ENCODE measurements at regions of chr14 and their contacts with region 1.

Region 1: GRCh38 chr14:69586404-69586803 is 11.7 kb upstream of the CCDC177 start:
- DNase-seq: no peak
- ATAC-seq: no peak
- H3K4me3 ChIP-seq: no peak overlapping the region
- H3K4me3 Mint-ChIP-seq: no peak overlapping the region
- H3K27ac ChIP-seq: no peak overlapping the region
- H3K27ac Mint-ChIP-seq: no peak overlapping the region
- H3K4me1 ChIP-seq: peaks cover 0 to 2% of the 10 kb centered on the region in 2 experiments
- H3K4me1 Mint-ChIP-seq: peaks cover 0 to 5% (median 0%) of the 10 kb centered on the region in 3 donors
- H3K27me3 ChIP-seq: peaks cover 0 to 2% of the 10 kb centered on the region in 2 experiments
- H3K27me3 Mint-ChIP-seq: no peaks in the 10 kb centered on the region

Region 2: GRCh38 chr14:69346710-69347109 is 239.7 kb before region 1 on chr14:
- CTCF ChIA-PET with region 1: no interaction called
- POLR2A ChIA-PET with region 1: no interaction called
- DNase-seq: peak in 2 of 35 experiments; percentile 8 to 14
- ATAC-seq: no peak
- H3K4me3 ChIP-seq: no peak overlapping the region
- H3K4me3 Mint-ChIP-seq: no peak overlapping the region
- H3K27ac ChIP-seq: no peak overlapping the region
- H3K27ac Mint-ChIP-seq: no peak overlapping the region
- H3K4me1 ChIP-seq: no peaks in the 10 kb centered on the region
- H3K4me1 Mint-ChIP-seq: no peaks in the 10 kb centered on the region
- H3K27me3 ChIP-seq: peaks cover 0 to 19% of the 10 kb centered on the region in 2 experiments
- H3K27me3 Mint-ChIP-seq: peaks cover 2 to 11% of the 10 kb centered on the region in 2 donors

Region 3: GRCh38 chr14:69726761-69727511 is 140.5 kb after region 1 on chr14:
- CTCF ChIA-PET with region 1: interaction called, 11 to 12 read pairs
- POLR2A ChIA-PET with region 1: interaction called, 3 to 4 read pairs
- DNase-seq: peak; percentile 44 to 90 (median 76)
- ATAC-seq: peak; percentile 90 to 94 (median 92)
- H3K4me3 ChIP-seq: peak overlapping the region; percentile 47 to 55
- H3K4me3 Mint-ChIP-seq: peak overlapping the region; percentile 54 to 73 (median 67)
- H3K27ac ChIP-seq: peak overlapping the region; percentile 40
- H3K27ac Mint-ChIP-seq: peak overlapping the region; percentile 56 to 70
- H3K4me1 ChIP-seq: peaks cover 0 to 12% of the 10 kb centered on the region in 2 experiments
- H3K4me1 Mint-ChIP-seq: peaks cover 12 to 30% (median 22%) of the 10 kb centered on the region in 3 donors
- H3K27me3 ChIP-seq: no peaks in the 10 kb centered on the region
- H3K27me3 Mint-ChIP-seq: peaks cover 0 to 4% of the 10 kb centered on the region in 2 donors

Region 4: DNA sequence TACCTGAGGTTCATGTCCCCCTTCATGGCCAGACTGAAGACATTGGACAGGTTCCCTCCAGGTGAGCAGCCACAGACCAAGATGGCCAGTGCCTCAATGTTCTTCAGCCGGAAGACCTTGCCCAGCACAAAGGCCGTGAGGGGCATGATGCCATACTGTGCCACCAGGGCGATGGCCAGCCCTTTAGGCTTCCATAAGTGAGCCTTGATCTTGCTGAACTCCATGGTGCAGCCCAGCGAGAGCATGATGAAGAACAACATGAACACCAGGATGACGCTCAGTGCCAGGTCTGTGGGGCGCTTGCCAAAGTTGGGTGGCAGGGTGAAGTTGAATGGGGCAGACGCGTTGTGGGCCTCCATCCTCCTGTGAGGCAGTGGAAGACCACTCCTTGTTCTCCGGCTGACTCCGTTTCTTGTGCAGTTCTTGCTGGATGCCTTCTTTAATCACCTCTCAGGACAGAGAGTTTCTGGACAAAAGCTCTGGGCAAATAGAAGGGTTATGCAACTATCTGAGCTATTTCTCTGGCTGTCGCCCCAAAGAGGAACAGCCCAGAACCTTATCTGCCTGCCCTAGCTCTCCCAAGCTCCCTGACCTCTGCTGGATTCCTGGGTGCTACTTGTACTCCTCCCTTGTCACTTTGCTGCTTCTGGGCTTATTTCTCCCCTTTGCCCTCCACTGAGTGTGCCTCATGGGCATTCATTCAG is 210.5 kb after region 1 on chr14 and contains the start of gene SLC10A1:
- CTCF ChIA-PET with region 1: no interaction called
- POLR2A ChIA-PET with region 1: no interaction called
- DNase-seq: no peak
- ATAC-seq: no peak
- H3K4me3 ChIP-seq: no peak within 1 kb of the TSS
- H3K4me3 Mint-ChIP-seq: no peak within 1 kb of the TSS
- H3K27ac ChIP-seq: no peak within 1 kb of the TSS
- H3K27ac Mint-ChIP-seq: no peak within 1 kb of the TSS
- H3K4me1 ChIP-seq: no peaks in the 10 kb centered on the region
- H3K4me1 Mint-ChIP-seq: no peaks in the 10 kb centered on the region
- H3K27me3 ChIP-seq: peaks cover 0 to 4% of the 10 kb centered on the region in 2 experiments
- H3K27me3 Mint-ChIP-seq: peaks cover 0 to 9% of the 10 kb centered on the region in 2 donors
- total RNA-seq, gene SLC10A1: 0.13 TPM in 1 of 5 donors, not detected in the others

Measured in T-cell (primary cell).